Gastrocnemius medialis (tissue), 4 donors: ENCODE measurements at regions of chr12 and their contacts with region 1.

Region 1: GRCh38 chr12:52213512-52214420 is 19.3 kb upstream of the KRT7 start:
- DNase-seq: peak; percentile 58 to 75
- ATAC-seq: peak; percentile 77 to 80
- H3K4me3 ChIP-seq: no peak overlapping the region
- H3K27ac ChIP-seq: no peak overlapping the region
- H3K4me1 ChIP-seq: peaks cover 6 to 15% of the 10 kb centered on the region in 2 donors
- H3K27me3 ChIP-seq: no peaks in the 10 kb centered on the region
- CTCF ChIP-seq: peak; percentile 91 to 98 (median 96)
- POLR2A ChIP-seq: no peak

Region 2: GRCh38 chr12:52156736-52157565 is 56.8 kb before region 1 on chr12:
- in situ Hi-C with region 1: no loop called
- intact Hi-C with region 1: loop called (anchors 2 kb)
- DNase-seq: peak; percentile 55 to 67
- ATAC-seq: peak; percentile 69 to 74
- H3K4me3 ChIP-seq: no peak overlapping the region
- H3K27ac ChIP-seq: no peak overlapping the region
- H3K4me1 ChIP-seq: peaks cover 0 to 3% of the 10 kb centered on the region in 2 donors
- H3K27me3 ChIP-seq: no peaks in the 10 kb centered on the region
- CTCF ChIP-seq: peak; percentile 90 to 95 (median 93)
- POLR2A ChIP-seq: no peak

Region 3: GRCh38 chr12:52171950-52172512 is 41.7 kb before region 1 on chr12:
- in situ Hi-C with region 1: no loop called
- intact Hi-C with region 1: loop called (anchors 2 kb)
- DNase-seq: peak; percentile 62 to 81
- ATAC-seq: peak; percentile 82 to 89
- H3K4me3 ChIP-seq: no peak overlapping the region
- H3K27ac ChIP-seq: peak overlapping the region; percentile 33 to 68 (median 58)
- H3K4me1 ChIP-seq: no peaks in the 10 kb centered on the region
- H3K27me3 ChIP-seq: no peaks in the 10 kb centered on the region
- CTCF ChIP-seq: peak; percentile 24 to 52 (median 45)
- POLR2A ChIP-seq: no peak

Region 4: GRCh38 chr12:52521175-52521567 is 307.4 kb after region 1 on chr12:
- in situ Hi-C with region 1: no loop called
- intact Hi-C with region 1: no loop called
- DNase-seq: no peak
- ATAC-seq: no peak
- H3K4me3 ChIP-seq: no peak overlapping the region
- H3K27ac ChIP-seq: no peak overlapping the region
- H3K4me1 ChIP-seq: no peaks in the 10 kb centered on the region
- H3K27me3 ChIP-seq: peaks cover 0 to 9% (median 0%) of the 10 kb centered on the region in 3 donors
- CTCF ChIP-seq: no peak
- POLR2A ChIP-seq: no peak